A673 (cell line): ENCODE measurements at regions of chr5 and their contacts with region 1.

Region 1: GRCh38 chr5:139711067-139711905 is 63.1 kb downstream of the CXXC5 start:
- DNase-seq: peak; percentile 95
- H3K4me3 ChIP-seq: peak overlapping the region; percentile 53
- H3K27ac ChIP-seq: peak overlapping the region; percentile 85
- H3K4me1 ChIP-seq: peaks cover 39% of the 10 kb centered on the region
- H3K27me3 ChIP-seq: no peaks in the 10 kb centered on the region
- CTCF ChIP-seq: peak; percentile 29; the same call in 1 of the 2 replicates

Region 2: DNA sequence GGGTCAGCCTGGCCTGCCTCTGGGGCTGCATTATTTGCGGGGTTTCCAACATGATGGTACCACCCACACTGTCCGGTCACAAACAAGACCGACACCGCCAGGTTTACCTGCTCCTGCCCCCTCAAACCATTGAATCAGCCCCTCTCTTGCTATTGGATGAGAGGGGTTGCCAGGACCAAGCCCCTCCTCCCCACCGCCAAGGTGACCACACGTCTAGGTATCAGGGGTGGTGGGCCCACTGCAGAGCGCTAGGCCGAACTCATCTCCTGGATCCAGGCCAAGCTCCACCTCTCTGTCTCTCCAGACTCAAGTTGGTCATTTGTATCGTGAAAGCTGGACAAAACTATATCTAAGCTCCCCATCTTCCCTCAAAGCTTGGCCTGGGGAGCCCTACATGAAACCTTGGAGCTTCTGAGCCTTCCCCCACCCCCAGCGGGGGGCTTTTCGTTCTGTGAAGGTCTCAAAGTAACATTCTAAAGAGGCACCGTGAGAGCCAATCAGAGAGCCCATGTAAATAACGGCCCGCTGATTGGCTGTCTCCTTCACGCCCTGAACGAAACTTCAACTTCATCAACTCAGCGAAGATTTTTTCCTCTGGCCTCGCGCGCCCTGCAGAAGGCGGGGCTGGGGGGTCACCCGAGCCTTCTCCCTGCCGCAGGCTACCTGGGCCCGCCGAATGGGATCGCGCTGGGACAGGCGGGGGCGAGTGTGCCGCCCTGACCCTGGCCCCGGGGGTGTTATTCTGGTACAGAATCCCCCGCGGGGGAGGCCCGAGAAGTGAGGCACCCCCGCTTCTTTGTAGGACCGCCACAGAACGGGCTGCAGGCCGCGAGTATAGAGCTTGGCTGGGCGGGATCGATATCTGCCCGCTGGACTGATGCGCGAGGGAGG is 34.8 kb after region 1 on chr5:
- CTCF ChIA-PET with region 1: interaction called, 10 read pairs
- POLR2A ChIA-PET with region 1: no interaction called
- intact Hi-C with region 1: loop called (anchors 2 kb)
- DNase-seq: peak; percentile 98
- H3K4me3 ChIP-seq: peak overlapping the region; percentile 43
- H3K27ac ChIP-seq: peak overlapping the region; percentile 80
- H3K4me1 ChIP-seq: peaks cover 43% of the 10 kb centered on the region
- H3K27me3 ChIP-seq: no peaks in the 10 kb centered on the region
- CTCF ChIP-seq: no peak

Region 3: GRCh38 chr5:140420226-140420570 is 708.9 kb after region 1 on chr5:
- CTCF ChIA-PET with region 1: no interaction called
- POLR2A ChIA-PET with region 1: no interaction called
- intact Hi-C with region 1: no loop called
- DNase-seq: no peak
- H3K4me3 ChIP-seq: no peak overlapping the region
- H3K27ac ChIP-seq: no peak overlapping the region
- H3K4me1 ChIP-seq: peaks cover 4% of the 10 kb centered on the region
- H3K27me3 ChIP-seq: no peaks in the 10 kb centered on the region
- CTCF ChIP-seq: no peak

Region 4: GRCh38 chr5:140800816-140801493 is 1089.7 kb after region 1 on chr5 and contains the start of gene PCDHA3:
- CTCF ChIA-PET with region 1: no interaction called
- POLR2A ChIA-PET with region 1: no interaction called
- intact Hi-C with region 1: no loop called
- DNase-seq: peak; percentile 68
- H3K4me3 ChIP-seq: peak within 1 kb of the TSS; percentile 51
- H3K27ac ChIP-seq: peak within 1 kb of the TSS; percentile 25
- H3K4me1 ChIP-seq: no peaks in the 10 kb centered on the region
- H3K27me3 ChIP-seq: no peaks in the 10 kb centered on the region
- CTCF ChIP-seq: peak; percentile 58
- total RNA-seq, gene PCDHA3: 2.6 and 3.2 TPM in 2 replicates